Mammary epithelial cell (primary cell): ENCODE measurements at regions of chr2 and their contacts with region 1.

Region 1: GRCh38 chr2:27185331-27186026 is 26.4 kb upstream of the ATRAID start:
- DNase-seq: no peak
- H3K4me3 ChIP-seq: no peak overlapping the region
- H3K27ac ChIP-seq: no peak overlapping the region
- H3K4me1 ChIP-seq: no peaks in the 10 kb centered on the region
- H3K27me3 ChIP-seq: no peaks in the 10 kb centered on the region
- CTCF ChIP-seq: no peak

Region 2: DNA sequence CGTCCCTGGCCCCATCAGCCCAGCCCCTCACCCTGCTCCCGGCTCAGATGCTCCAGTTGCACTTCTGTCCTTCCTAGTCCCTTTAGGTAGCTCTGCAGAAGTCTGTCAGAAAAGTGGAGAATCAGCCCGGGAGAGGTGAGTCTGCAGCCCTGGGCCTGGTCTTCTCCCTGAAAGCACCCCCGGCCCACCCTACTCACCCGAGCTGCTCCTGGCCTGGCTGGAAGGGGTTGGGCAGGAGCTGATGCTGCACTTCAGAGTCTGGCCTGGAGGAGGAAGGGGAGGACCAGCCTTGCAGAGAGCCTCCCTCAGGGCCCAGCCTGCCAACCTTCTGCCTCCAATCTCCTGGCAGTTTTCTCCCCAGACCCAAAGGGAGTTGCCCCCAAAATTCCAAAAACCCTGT is 83.2 kb before region 1 on chr2:
- CTCF ChIA-PET with region 1: no interaction called
- dilution Hi-C with region 1: no loop called
- in situ Hi-C with region 1: loop called in 1 of 2 experiments (anchors 10 kb)
- intact Hi-C with region 1: no loop called
- DNase-seq: no peak
- H3K4me3 ChIP-seq: no peak overlapping the region
- H3K27ac ChIP-seq: no peak overlapping the region
- H3K4me1 ChIP-seq: no peaks in the 10 kb centered on the region
- H3K27me3 ChIP-seq: no peaks in the 10 kb centered on the region
- CTCF ChIP-seq: no peak

Region 3: GRCh38 chr2:27133905-27134780 is 51.3 kb before region 1 on chr2 and contains the start of gene PREB:
- CTCF ChIA-PET with region 1: no interaction called
- dilution Hi-C with region 1: no loop called
- in situ Hi-C with region 1: no loop called
- intact Hi-C with region 1: loop called (anchors 5 kb)
- DNase-seq: peak; percentile 93
- H3K4me3 ChIP-seq: peak within 1 kb of the TSS; percentile 76 to 96 (median 87)
- H3K27ac ChIP-seq: peak within 1 kb of the TSS; percentile 71
- H3K4me1 ChIP-seq: peaks cover 6% of the 10 kb centered on the region
- H3K27me3 ChIP-seq: no peaks in the 10 kb centered on the region
- CTCF ChIP-seq: peak in 1 of 2 donors; percentile 19
- total RNA-seq, gene PREB: 31.0 to 48.9 TPM

Region 4: GRCh38 chr2:27715318-27716210 is 530.1 kb after region 1 on chr2:
- CTCF ChIA-PET with region 1: no interaction called
- dilution Hi-C with region 1: no loop called
- in situ Hi-C with region 1: no loop called
- intact Hi-C with region 1: no loop called
- DNase-seq: no peak
- H3K4me3 ChIP-seq: peak overlapping the region in 1 of 3 experiments; percentile 11
- H3K27ac ChIP-seq: no peak overlapping the region
- H3K4me1 ChIP-seq: peaks cover 49% of the 10 kb centered on the region
- H3K27me3 ChIP-seq: no peaks in the 10 kb centered on the region
- CTCF ChIP-seq: no peak